ENCODE measurements at regions of chr14 and their contacts with region 1.

Region 1: GRCh38 chr14:36373982-36374673 is 53.7 kb upstream of the MBIP start:
- DNase-seq: peak; percentile 76
- H3K4me3 ChIP-seq: no peak overlapping the region
- H3K27ac ChIP-seq: no peak overlapping the region
- H3K4me1 ChIP-seq: no peaks in the 10 kb centered on the region
- H3K27me3 ChIP-seq: peaks cover 0 to 4% (median 0%) of the 10 kb centered on the region in 7 donors
- CTCF ChIP-seq: peak in 10 of 11 experiments; percentile 14 to 78 (median 64)
- POLR2A ChIP-seq: no peak

Region 2: DNA sequence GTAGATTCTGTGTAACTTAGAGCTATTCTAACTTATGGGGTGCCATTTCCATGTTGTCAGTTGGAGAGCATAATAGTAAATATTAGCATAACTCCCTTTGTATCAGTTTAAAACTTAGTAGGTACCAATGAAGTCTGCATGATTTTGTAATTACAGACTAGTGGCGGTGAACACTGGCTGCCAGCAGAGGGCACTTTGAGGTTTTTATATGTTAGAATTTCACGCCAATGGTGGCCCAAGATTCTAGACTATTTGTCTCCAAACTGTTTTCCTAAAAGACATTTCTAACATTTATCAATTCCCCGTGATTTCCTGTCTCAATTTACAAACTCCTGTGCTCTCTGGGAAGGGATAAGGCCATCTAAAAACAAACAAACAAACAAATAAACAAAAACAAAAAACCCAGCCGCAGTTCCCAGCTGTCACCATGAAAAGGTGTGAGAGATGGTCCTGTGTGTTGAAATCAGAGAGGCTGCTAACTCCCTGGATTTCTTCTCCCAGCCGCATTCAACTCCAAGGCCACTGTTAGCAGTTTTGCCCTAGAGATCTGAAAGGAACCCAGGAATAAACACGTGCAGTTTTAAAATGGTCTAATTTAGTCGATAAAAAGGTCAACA is 490.3 kb before region 1 on chr14:
- intact Hi-C with region 1: loop called (anchors 10 kb)
- DNase-seq: no peak
- H3K4me3 ChIP-seq: no peak overlapping the region
- H3K27ac ChIP-seq: no peak overlapping the region
- H3K4me1 ChIP-seq: peaks cover 0 to 6% (median 3%) of the 10 kb centered on the region in 6 donors
- H3K27me3 ChIP-seq: peaks cover 0 to 7% (median 0%) of the 10 kb centered on the region in 7 donors
- CTCF ChIP-seq: peak in 6 of 11 experiments; percentile 22 to 46 (median 40)
- POLR2A ChIP-seq: no peak

Region 3: DNA sequence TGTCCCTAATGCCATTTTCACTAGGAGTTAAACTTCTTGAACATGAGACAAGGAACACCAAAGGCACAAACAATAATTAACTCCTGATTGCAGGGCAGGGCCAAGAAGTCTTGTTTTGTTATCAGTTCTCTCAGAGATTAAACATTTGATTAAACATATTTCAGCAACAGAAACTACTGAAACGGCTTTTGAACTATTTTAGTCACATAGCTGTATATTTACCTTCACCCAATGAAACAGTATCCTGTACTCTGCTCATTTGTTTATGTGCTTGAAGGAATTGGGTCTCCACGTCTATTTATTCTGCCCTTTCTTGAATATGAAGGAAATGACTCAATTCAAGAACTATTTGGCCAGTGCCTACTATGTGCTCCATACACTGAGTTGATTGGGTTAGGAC is 146.3 kb before region 1 on chr14:
- intact Hi-C with region 1: no loop called
- DNase-seq: no peak
- H3K4me3 ChIP-seq: no peak overlapping the region
- H3K27ac ChIP-seq: no peak overlapping the region
- H3K4me1 ChIP-seq: no peaks in the 10 kb centered on the region
- H3K27me3 ChIP-seq: peaks cover 0 to 3% (median 0%) of the 10 kb centered on the region in 7 donors
- CTCF ChIP-seq: no peak
- POLR2A ChIP-seq: no peak

Region 4: GRCh38 chr14:36320200-36320896 is 53.8 kb before region 1 on chr14 and contains the start of gene MBIP:
- intact Hi-C with region 1: no loop called
- DNase-seq: peak; percentile 92
- H3K4me3 ChIP-seq: peak within 1 kb of the TSS; percentile 71 to 90 (median 82)
- H3K27ac ChIP-seq: peak within 1 kb of the TSS; percentile 5 to 84 (median 78)
- H3K4me1 ChIP-seq: peaks cover 9 to 46% (median 23%) of the 10 kb centered on the region in 6 donors
- H3K27me3 ChIP-seq: peaks cover 0 to 20% (median 0%) of the 10 kb centered on the region in 7 donors
- CTCF ChIP-seq: peak in 1 of 11 experiments; percentile 12
- POLR2A ChIP-seq: peak in 1 of 3 donors; percentile 10
- total RNA-seq, gene MBIP: 13.4 to 23.8 (median 16.6) TPM

Measured in spleen (tissue), 13 donors.